Activated T-helper 1 cell treated with anti-CD3 and anti-CD28 coated beads, Interleukin-12 subunit alpha, Interleukin-12 subunit beta, Interleukin-2, Interleukin-4 antibody, amounts not matched to agents 30 ng/mL and 10 ng/mL and 1 ng/mL, durations not matched to agents 14 hours and 24 hours and 36 hours (primary cell): ENCODE measurements at regions of chr6 and their contacts with region 1.

Region 1: GRCh38 chr6:106163446-106163965 is 77.4 kb downstream of the PRDM1 start:
- DNase-seq: peak; percentile 49
- H3K4me3 Mint-ChIP-seq: peak overlapping the region; percentile 69
- H3K27ac Mint-ChIP-seq: peak overlapping the region; percentile 98
- H3K4me1 Mint-ChIP-seq: peaks cover 73% of the 10 kb centered on the region
- H3K27me3 Mint-ChIP-seq: peaks cover 3% of the 10 kb centered on the region

Region 2: GRCh38 chr6:105431226-105431625 is 732.3 kb before region 1 on chr6:
- intact Hi-C with region 1: loop called (anchors 1 kb)
- DNase-seq: peak; percentile 12
- H3K4me3 Mint-ChIP-seq: no peak overlapping the region
- H3K27ac Mint-ChIP-seq: no peak overlapping the region
- H3K4me1 Mint-ChIP-seq: peaks cover 5% of the 10 kb centered on the region
- H3K27me3 Mint-ChIP-seq: peaks cover 35% of the 10 kb centered on the region

Region 3: DNA sequence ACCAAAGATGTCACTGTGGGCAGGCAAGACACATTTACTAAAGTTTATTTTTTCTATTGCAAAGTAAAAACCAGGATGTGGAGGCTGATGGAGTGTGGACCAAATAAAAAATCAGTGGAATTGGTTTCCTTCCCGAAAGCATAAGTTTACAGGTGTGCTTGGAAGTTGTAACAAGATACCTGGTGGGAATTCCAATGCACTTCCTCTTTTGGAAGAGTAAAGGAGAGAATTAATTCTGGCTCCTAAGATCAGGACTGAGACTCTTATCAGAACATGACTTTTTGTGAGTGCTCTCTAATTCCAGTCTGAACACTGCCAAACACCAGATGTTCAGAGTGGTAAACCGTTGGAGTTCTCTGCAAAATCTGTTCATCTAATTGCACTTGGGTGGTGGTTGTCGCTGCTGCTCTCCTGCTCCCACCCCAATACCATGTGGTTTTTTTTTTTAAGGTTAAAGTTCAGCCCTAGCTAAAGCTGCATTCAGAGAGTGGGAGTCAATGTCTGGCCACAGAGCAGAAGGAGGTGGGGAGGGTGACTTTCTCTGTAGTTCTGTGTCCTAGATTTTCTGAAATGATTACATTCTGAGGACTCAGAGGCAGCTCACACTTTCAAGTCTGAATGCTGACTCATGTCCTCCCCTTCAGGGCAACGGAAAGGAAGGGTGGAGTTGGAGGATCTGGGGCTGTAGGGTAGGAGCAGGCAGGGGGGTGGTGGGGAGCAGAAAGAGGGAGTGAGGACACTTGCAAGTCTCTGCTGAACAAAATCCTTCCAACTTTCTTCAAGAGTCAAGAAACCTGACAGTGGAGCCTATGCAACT is 353.2 kb before region 1 on chr6:
- intact Hi-C with region 1: loop called (anchors 1 kb)
- DNase-seq: peak; percentile 73
- H3K4me3 Mint-ChIP-seq: peak overlapping the region; percentile 58
- H3K27ac Mint-ChIP-seq: peak overlapping the region; percentile 92
- H3K4me1 Mint-ChIP-seq: peaks cover 76% of the 10 kb centered on the region
- H3K27me3 Mint-ChIP-seq: no peaks in the 10 kb centered on the region

Region 4: DNA sequence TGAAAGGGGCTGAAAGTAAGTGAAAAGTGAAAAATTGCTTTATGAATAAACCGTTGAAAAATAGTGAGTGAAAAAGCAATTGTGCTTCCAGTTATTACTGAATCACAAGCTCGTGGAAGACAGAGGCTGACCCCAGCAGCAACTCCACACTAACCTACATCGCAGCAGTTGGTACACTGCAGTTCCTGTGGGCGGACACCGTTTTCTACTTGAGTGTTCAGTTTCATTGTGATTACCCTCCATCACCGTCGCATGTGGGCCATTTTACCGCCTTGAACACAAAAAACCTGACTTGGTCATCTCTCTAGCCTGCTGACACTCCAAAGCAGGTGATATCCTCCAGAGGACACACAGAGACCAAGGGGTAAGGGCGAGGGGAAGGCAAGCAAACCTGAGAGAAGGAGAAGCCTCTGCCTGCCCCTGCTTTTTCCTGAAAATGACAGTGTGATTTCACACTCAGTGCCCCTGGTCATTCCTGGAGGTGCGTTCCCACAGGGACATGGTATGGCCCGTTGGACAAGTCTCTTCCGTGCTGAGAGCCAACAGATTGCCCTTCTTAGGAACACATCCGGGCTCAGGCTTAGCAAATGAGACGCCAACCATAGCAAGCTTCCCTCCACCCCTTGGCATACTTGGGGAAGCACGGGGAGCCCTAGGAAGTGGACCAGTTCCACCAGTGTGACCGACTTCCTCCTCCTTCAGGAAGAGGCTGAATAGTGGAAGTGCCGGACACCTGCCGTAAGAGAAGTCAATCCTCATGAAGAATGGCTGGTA is 48.8 kb before region 1 on chr6:
- intact Hi-C with region 1: loop called (anchors 1 kb)
- DNase-seq: peak; percentile 47
- H3K4me3 Mint-ChIP-seq: peak overlapping the region; percentile 58
- H3K27ac Mint-ChIP-seq: peak overlapping the region; percentile 82
- H3K4me1 Mint-ChIP-seq: peaks cover 93% of the 10 kb centered on the region
- H3K27me3 Mint-ChIP-seq: peaks cover 2% of the 10 kb centered on the region

Region 5: GRCh38 chr6:106149472-106150069 is 13.9 kb before region 1 on chr6:
- intact Hi-C with region 1: loop called (anchors 1 kb)
- DNase-seq: peak; percentile 19
- H3K4me3 Mint-ChIP-seq: no peak overlapping the region
- H3K27ac Mint-ChIP-seq: peak overlapping the region; percentile 45
- H3K4me1 Mint-ChIP-seq: peaks cover 55% of the 10 kb centered on the region
- H3K27me3 Mint-ChIP-seq: no peaks in the 10 kb centered on the region

Region 6: DNA sequence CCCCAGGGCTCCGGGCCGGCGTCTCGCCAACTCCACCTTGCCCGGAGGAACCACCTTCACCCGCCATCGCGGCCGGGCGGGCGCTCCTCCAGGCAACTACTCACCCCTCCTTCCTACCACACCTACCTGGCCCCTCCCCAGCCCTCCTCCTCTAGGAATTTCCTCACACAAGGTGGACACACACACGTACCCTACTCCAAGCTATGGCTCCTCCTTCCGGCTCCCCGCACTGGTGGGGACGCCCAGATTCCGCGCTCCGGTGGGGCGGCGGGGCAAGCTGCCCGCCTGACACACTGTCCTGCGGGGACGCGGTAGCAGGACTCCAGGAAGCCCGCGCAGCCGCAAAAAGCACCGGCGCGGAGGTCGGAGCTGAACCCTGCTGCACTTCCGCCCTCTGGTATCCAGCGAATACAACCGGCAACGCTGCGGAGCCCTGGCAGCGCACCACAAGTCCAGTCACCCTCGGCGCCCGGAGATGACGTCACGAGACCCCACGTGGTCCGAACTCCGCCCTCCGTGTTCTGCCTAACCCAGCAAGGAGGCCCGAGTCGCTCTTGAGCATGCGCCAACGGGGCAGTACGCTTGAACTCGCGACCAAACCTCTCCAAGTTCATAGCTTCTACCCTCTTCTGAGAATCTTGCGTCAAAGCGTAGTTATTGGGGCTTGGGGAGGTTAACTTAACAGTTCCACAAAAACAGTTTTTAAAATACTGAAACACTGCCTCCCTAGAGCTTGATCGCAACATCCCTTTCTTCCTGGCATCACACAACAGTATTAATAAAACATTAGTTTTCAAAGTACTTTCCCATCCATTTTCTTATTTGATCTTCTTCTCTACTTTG is 162.1 kb after region 1 on chr6 and contains the start of gene ATG5:
- intact Hi-C with region 1: loop called (anchors 1 kb)
- DNase-seq: peak; percentile 100
- H3K4me3 Mint-ChIP-seq: peak within 1 kb of the TSS; percentile 100
- H3K27ac Mint-ChIP-seq: peak within 1 kb of the TSS; percentile 98
- H3K4me1 Mint-ChIP-seq: peaks cover 35% of the 10 kb centered on the region
- H3K27me3 Mint-ChIP-seq: peaks cover 22% of the 10 kb centered on the region
- total RNA-seq, gene ATG5: 36.0 and 36.7 TPM in 2 replicates